ENCODE measurements at regions of chr11 and their contacts with region 1.

Region 1: GRCh38 chr11:84558085-84558905 is 1068.8 kb downstream of the DLG2 start:
- ATAC-seq: peak; percentile 41 to 82 (median 66)
- H3K4me3 ChIP-seq: no peak overlapping the region
- H3K27ac ChIP-seq: no peak overlapping the region
- H3K4me1 ChIP-seq: no peaks in the 10 kb centered on the region

Region 2: GRCh38 chr11:84714316-84714780 is 156.1 kb after region 1 on chr11:
- in situ Hi-C with region 1: loop called in 1 of 9 experiments (anchors 25 kb)
- ATAC-seq: peak in 4 of 8 experiments; percentile 45 to 91 (median 86)
- H3K4me3 ChIP-seq: no peak overlapping the region
- H3K27ac ChIP-seq: no peak overlapping the region
- H3K4me1 ChIP-seq: no peaks in the 10 kb centered on the region

Region 3: DNA sequence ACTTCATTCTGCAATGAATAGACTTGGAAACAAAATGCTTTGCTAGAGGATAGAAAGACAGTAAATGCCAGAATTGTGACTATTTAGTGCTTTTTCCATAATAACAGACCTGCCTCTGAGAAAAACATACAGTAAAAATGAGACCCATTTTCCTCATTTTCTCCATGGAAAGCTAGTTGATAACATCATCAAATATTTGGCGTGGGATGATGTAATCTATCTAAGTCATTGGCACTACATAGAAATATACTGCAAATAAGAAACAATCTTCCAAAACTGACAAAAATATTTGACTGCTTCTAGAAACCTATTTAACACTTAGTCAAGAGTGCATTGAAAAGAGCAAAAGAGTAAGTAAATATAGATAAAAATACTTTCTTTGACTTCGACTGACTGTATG is 452.9 kb after region 1 on chr11:
- in situ Hi-C with region 1: no loop called
- ATAC-seq: no peak
- H3K4me3 ChIP-seq: no peak overlapping the region
- H3K27ac ChIP-seq: no peak overlapping the region
- H3K4me1 ChIP-seq: no peaks in the 10 kb centered on the region